ENCODE measurements at regions of chr5 and their contacts with region 1.

Region 1: GRCh38 chr5:138035605-138036537 is 3.0 kb upstream of the FAM13B start:
- DNase-seq: peak in 9 of 10 donors; percentile 41 to 78 (median 57)
- H3K4me3 ChIP-seq: peak overlapping the region in 36 of 59 donors; percentile 4 to 57 (median 19)
- H3K27ac ChIP-seq: peak overlapping the region; percentile 77 to 99 (median 93)
- H3K27me3 ChIP-seq: no peaks in the 10 kb centered on the region
- CTCF ChIP-seq: peak; percentile 60 to 100 (median 95)

Region 2: DNA sequence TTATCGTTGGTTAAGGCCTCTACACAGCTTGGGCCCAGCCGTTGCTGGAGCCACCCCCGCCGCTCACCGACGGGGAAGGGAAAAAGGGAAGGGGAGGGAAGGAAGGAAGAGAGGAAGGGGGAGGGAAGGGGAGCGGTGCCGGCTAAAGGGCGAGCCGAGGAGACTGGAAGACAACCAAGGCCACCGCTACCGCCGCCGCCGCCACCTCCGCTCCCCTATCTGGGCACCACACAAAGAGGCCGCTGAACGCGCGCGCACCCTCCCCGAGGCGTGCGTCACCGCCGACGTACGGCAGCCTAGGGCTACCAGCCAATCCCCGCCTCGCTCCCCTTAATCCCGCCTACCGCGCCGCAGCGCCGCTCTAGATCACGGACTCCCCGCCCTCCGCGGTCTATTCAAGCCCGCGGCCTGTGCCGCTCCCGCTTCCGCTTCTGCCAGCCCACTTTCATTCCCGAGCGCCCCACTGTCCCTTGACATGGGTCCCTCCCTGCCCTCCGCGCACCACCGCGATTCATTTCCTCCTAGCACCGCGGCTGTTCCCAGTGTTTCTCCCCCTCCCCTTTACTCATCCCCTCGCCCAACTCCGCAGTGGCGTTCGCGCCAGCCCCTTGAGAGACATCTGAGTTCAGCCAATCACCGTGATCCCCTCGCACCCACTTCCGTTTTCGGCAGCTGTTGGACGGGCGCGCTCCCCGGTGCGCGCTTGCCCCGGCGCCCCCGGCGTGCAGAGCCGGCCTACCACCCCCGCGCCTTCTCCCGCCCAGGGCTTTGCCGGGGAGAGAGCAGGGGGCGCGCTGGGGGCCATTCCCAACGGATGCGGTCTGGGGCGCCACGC is 281.5 kb before region 1 on chr5 and contains the start of gene HNRNPA0:
- intact Hi-C with region 1: loop called in 1 of 2 experiments (anchors 2 kb)
- DNase-seq: peak; percentile 96 to 98 (median 98)
- H3K4me3 ChIP-seq: peak within 1 kb of the TSS; percentile 67 to 96 (median 89)
- H3K27ac ChIP-seq: peak within 1 kb of the TSS; percentile 84 to 100 (median 99)
- H3K27me3 ChIP-seq: no peaks in the 10 kb centered on the region
- CTCF ChIP-seq: peak in 36 of 56 donors; percentile 6 to 46 (median 22)
- total RNA-seq, gene HNRNPA0: 18.9 to 34.2 (median 26.7) TPM

Region 3: GRCh38 chr5:137778772-137779564 is 256.9 kb before region 1 on chr5:
- intact Hi-C with region 1: loop called (anchors 2 to 5 kb)
- DNase-seq: peak in 1 of 10 donors; percentile 8
- H3K4me3 ChIP-seq: no peak overlapping the region
- H3K27ac ChIP-seq: peak overlapping the region in 25 of 59 donors; percentile 1 to 61 (median 17)
- H3K27me3 ChIP-seq: no peaks in the 10 kb centered on the region
- CTCF ChIP-seq: peak; percentile 82 to 98 (median 90)

Region 4: GRCh38 chr5:137901011-137901817 is 134.7 kb before region 1 on chr5:
- intact Hi-C with region 1: loop called in 1 of 2 experiments (anchors 10 kb)
- DNase-seq: no peak
- H3K4me3 ChIP-seq: peak overlapping the region in 30 of 59 donors; percentile 0 to 53 (median 16)
- H3K27ac ChIP-seq: peak overlapping the region; percentile 31 to 99 (median 94)
- H3K27me3 ChIP-seq: no peaks in the 10 kb centered on the region
- CTCF ChIP-seq: peak in 2 of 56 donors; percentile 7 to 18

Region 5: DNA sequence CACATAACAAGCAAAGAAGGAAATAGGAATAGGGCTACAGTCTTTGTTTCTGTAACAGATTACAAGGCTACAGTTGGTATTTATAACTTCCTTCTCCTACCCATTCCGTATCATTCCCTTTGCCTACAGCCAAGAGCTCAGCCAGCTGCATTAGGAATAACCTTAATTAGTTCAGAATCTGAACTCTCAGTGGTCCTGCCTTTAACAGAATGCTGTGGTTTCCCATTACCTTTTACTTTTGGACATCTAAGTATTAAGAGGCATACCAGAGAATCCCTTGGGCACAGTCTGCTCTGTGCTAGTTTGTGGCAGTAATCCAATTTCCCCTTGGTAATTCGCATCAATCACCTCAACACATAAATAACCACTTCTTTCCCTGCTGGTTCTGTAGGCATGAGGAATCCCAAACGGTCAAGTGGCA is 102.4 kb before region 1 on chr5:
- intact Hi-C with region 1: loop called in 1 of 2 experiments (anchors 10 kb)
- DNase-seq: no peak
- H3K4me3 ChIP-seq: no peak overlapping the region
- H3K27ac ChIP-seq: peak overlapping the region in 58 of 59 donors; percentile 8 to 90 (median 76)
- H3K27me3 ChIP-seq: no peaks in the 10 kb centered on the region
- CTCF ChIP-seq: no peak

Region 6: DNA sequence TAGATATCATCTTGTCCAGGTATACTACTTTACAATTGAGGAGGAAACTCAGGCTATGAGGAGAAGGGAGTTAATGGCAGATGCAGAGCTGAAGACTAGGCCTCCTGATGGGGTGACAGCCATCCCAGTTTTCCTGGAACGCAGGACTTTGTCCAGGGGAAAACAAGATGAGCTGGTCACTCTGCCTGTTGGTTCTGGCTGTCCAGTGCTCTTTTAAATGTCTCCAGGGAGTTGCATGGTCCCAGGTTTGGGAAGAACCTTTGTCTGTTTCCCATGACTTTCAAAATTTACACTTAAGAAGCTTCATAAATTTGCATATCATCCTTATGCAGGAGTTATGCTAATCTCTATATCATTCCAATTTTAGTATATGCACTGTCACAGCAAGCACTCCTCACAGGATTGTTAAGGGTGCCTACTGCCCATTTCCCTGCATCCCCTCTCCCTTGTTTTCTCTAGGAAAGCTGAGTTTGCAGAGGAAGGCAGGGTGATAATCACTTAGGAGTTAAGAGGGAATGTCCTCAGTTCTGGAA is 33.3 kb after region 1 on chr5:
- intact Hi-C with region 1: loop called in 1 of 2 experiments (anchors 2 kb)
- DNase-seq: peak in 1 of 10 donors; percentile 5
- H3K4me3 ChIP-seq: no peak overlapping the region
- H3K27ac ChIP-seq: peak overlapping the region in 13 of 59 donors; percentile 1 to 57 (median 27)
- H3K27me3 ChIP-seq: no peaks in the 10 kb centered on the region
- CTCF ChIP-seq: peak in 6 of 56 donors; percentile 3 to 39 (median 13)

Region 7: DNA sequence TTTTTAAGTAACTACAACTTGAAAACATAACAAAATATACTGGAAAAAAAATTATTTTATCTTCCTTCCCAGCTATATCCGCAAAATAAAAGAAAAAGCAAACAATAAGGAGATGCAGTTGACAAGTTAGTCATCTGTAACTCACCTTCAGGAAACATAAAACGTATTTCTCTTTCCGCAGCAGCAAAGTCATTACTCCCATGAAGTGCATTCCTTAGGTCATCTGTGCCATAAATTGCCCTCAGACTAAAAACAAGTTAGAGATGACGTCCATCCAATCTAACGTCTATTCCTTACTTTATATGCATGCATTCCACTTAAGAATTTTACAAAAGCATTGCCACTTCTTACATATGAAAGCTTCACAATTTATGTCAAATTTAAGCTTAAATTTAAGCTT is 92.5 kb after region 1 on chr5:
- intact Hi-C with region 1: loop called (anchors 1 to 5 kb)
- DNase-seq: no peak
- H3K4me3 ChIP-seq: no peak overlapping the region
- H3K27ac ChIP-seq: no peak overlapping the region
- H3K27me3 ChIP-seq: no peaks in the 10 kb centered on the region
- CTCF ChIP-seq: no peak